ENCODE measurements at regions of chr6 and their contacts with region 1.

Region 1: GRCh38 chr6:44172731-44173500 is 14.3 kb downstream of the CAPN11 start:
- DNase-seq: peak; percentile 84
- H3K4me3 Mint-ChIP-seq: no peak overlapping the region
- H3K27ac Mint-ChIP-seq: no peak overlapping the region
- H3K4me1 Mint-ChIP-seq: peaks cover 16% of the 10 kb centered on the region
- H3K27me3 Mint-ChIP-seq: no peaks in the 10 kb centered on the region
- CTCF ChIP-seq: peak; percentile 85

Region 2: GRCh38 chr6:44161997-44162338 is 10.9 kb before region 1 on chr6:
- CTCF ChIA-PET with region 1: interaction called, 31 read pairs
- POLR2A ChIA-PET with region 1: interaction called, 3 read pairs
- intact Hi-C with region 1: no loop called
- DNase-seq: peak; percentile 64
- H3K4me3 Mint-ChIP-seq: no peak overlapping the region
- H3K27ac Mint-ChIP-seq: no peak overlapping the region
- H3K4me1 Mint-ChIP-seq: peaks cover 16% of the 10 kb centered on the region
- H3K27me3 Mint-ChIP-seq: peaks cover 23% of the 10 kb centered on the region
- CTCF ChIP-seq: no peak

Region 3: DNA sequence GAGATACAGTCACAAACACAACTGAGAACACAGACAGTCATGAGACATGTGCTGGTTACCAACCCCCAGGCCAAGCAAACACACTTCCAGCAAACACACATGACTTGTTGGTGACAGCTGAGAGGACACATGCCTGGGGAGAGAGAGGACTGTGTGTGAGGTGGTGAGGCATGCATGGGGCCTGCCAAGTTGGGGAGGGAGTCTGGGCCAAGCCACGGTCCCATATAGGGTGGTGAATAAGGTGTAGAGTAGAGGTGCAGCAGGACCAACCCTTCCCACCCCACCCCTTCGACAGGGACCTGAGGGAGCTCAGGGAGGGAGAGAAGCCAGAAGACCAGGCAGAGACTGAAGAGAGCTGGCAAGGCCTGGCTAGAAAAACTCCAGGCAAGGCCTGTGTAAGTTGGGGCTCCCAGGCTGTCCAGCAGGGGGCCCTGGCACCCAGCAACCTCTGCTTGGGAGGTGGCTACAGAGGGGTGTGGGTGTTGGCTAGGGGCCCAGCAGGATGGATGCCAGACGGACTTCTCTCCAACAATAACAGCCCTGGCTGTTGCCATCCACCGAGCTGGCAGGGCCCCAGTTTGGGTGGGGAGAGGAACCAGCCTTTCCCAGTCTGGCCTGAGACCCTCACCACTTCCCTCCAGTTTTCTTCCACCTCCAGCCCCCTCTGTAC is 48.5 kb after region 1 on chr6:
- CTCF ChIA-PET with region 1: interaction called, 11 read pairs
- POLR2A ChIA-PET with region 1: interaction called, 3 read pairs
- intact Hi-C with region 1: loop called (anchors 2 kb)
- DNase-seq: peak; percentile 96
- H3K4me3 Mint-ChIP-seq: peak overlapping the region; percentile 47
- H3K27ac Mint-ChIP-seq: peak overlapping the region; percentile 89
- H3K4me1 Mint-ChIP-seq: peaks cover 37% of the 10 kb centered on the region
- H3K27me3 Mint-ChIP-seq: no peaks in the 10 kb centered on the region
- CTCF ChIP-seq: peak; percentile 76

Region 4: GRCh38 chr6:44237813-44238433 is 65.0 kb after region 1 on chr6:
- CTCF ChIA-PET with region 1: interaction called, 38 read pairs
- POLR2A ChIA-PET with region 1: interaction called, 3 read pairs
- intact Hi-C with region 1: loop called (anchors 1 kb)
- DNase-seq: peak; percentile 69
- H3K4me3 Mint-ChIP-seq: peak overlapping the region; percentile 86
- H3K27ac Mint-ChIP-seq: peak overlapping the region; percentile 85
- H3K4me1 Mint-ChIP-seq: peaks cover 22% of the 10 kb centered on the region
- H3K27me3 Mint-ChIP-seq: no peaks in the 10 kb centered on the region
- CTCF ChIP-seq: peak; percentile 94

Region 5: GRCh38 chr6:44257025-44257752 is 84.3 kb after region 1 on chr6 and contains the start of gene SLC35B2:
- CTCF ChIA-PET with region 1: interaction called, 31 read pairs
- POLR2A ChIA-PET with region 1: interaction called, 8 read pairs
- intact Hi-C with region 1: no loop called
- DNase-seq: peak; percentile 47
- H3K4me3 Mint-ChIP-seq: peak within 1 kb of the TSS; percentile 84
- H3K27ac Mint-ChIP-seq: peak within 1 kb of the TSS; percentile 57
- H3K4me1 Mint-ChIP-seq: peaks cover 50% of the 10 kb centered on the region
- H3K27me3 Mint-ChIP-seq: no peaks in the 10 kb centered on the region
- CTCF ChIP-seq: peak; percentile 78
- total RNA-seq, gene SLC35B2: 27.1 and 31.3 TPM in 2 replicates

Measured in MCF 10A (cell line).